Activated CD4-positive, alpha-beta T cell treated with anti-CD3 and anti-CD28 coated beads for 36 hours (primary cell): ENCODE measurements at regions of chr6 and their contacts with region 1.

Region 1: GRCh38 chr6:56708810-56709597 is 66.3 kb upstream of the DST start:
- DNase-seq: no peak
- ATAC-seq: no peak
- H3K4me3 Mint-ChIP-seq: no peak overlapping the region
- H3K27ac Mint-ChIP-seq: no peak overlapping the region
- H3K4me1 Mint-ChIP-seq: no peaks in the 10 kb centered on the region
- H3K27me3 Mint-ChIP-seq: peaks cover 2% of the 10 kb centered on the region

Region 2: DNA sequence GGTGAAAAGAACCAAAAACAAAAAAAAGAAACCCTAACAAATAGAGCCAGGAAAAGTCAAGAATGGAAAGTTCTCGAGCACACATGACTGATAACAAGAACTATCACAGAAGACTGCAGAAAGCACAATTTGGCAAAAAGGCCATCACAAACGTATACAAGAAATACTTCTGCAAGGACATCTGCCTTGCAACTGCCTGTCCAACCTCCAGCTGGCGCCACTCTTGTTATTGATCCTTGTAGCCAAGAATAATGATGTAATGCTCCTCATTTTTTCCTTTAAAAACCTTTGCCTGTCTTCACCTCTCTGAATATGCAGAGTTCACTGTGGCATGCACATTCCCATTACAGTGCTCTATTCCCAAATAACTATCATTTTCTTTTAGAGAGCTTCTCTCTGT is 745.7 kb before region 1 on chr6:
- CTCF ChIA-PET with region 1: no interaction called
- POLR2A ChIA-PET with region 1: no interaction called
- intact Hi-C with region 1: no loop called
- DNase-seq: no peak
- ATAC-seq: no peak
- H3K4me3 Mint-ChIP-seq: no peak overlapping the region
- H3K27ac Mint-ChIP-seq: no peak overlapping the region
- H3K4me1 Mint-ChIP-seq: no peaks in the 10 kb centered on the region
- H3K27me3 Mint-ChIP-seq: no peaks in the 10 kb centered on the region

Region 3: DNA sequence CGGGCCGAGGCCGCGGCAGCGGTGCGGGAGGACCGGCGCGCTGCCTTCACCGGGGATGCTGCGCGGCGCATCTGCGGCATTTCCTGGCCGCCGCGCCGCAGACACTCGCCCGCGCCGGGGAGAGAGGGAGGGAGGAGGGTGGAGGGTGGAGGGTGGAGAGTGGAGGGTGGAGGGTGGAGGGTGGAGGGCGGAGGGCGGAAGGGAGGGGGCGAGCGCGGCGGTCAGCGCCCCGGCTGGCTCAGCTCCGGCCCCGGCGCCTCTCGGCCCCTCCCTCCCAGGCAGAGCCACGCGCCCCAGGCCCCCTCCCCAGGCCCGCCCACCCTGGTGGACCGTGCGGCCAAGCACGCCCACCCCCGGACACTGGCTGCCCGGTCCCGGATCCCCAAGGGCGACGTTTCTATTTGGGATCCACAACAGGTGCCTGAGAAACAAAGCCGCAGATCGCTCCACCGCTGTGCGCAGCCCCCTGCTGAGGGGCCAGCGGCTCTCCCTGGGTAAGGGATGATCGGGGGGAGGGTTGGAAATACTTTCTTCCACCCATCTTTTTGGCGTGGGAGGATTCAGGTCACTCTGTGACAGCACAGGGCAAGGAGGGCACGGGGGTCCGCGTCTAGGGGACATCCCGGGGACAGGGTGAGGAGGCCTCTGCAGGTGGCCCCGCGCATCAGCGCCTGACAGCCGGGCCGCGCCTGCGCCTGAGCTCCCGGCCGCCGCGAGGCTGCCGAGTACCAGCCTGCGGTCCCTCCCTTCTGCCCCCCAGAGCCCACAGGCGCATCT is 134.8 kb after region 1 on chr6:
- CTCF ChIA-PET with region 1: interaction called, 3 read pairs
- POLR2A ChIA-PET with region 1: no interaction called
- intact Hi-C with region 1: loop called in 1 of 2 experiments (anchors 2 kb)
- DNase-seq: peak; percentile 82
- ATAC-seq: peak; percentile 97
- H3K4me3 Mint-ChIP-seq: peak overlapping the region; percentile 68
- H3K27ac Mint-ChIP-seq: no peak overlapping the region
- H3K4me1 Mint-ChIP-seq: peaks cover 4% of the 10 kb centered on the region
- H3K27me3 Mint-ChIP-seq: peaks cover 47% of the 10 kb centered on the region

Region 4: DNA sequence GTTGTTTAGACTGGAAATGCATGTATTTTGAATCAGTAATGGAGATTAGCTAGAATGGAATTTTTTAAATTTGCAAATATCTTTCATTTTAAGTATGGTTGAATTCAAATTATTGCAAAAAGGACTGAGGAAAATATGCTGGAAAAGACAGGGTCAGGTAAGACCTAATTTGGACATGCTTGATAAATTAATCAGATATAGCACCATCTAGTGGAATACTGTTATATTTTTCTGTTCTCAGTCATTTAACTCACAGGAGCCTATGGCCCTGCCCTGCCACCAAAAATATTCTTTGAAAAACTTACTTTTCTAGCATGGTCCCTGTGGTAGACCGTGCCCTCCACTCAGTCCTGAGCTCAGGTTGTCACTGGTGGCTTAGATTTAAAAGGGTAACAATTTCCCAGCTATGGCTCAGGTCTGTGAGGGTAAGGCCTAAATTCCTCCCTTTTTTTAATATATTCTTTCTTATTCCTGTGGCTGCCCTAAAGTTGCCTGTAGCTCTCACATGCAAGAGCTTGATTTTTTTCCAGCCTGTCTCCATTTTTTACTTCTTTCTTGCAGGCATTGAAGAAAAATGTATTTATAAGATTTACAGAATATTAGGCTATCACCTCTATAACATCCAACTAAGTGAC is 312.2 kb after region 1 on chr6:
- CTCF ChIA-PET with region 1: no interaction called
- POLR2A ChIA-PET with region 1: no interaction called
- intact Hi-C with region 1: loop called in 1 of 2 experiments (anchors 10 kb)
- DNase-seq: no peak
- ATAC-seq: peak; percentile 39
- H3K4me3 Mint-ChIP-seq: no peak overlapping the region
- H3K27ac Mint-ChIP-seq: no peak overlapping the region
- H3K4me1 Mint-ChIP-seq: no peaks in the 10 kb centered on the region
- H3K27me3 Mint-ChIP-seq: peaks cover 2% of the 10 kb centered on the region